Aorta (tissue), 5 donors: ENCODE measurements at regions of chr15 and their contacts with region 1.

Region 1: GRCh38 chr15:85794603-85795336 is at the start of gene KLHL25:
- DNase-seq: peak; percentile 97
- ATAC-seq: peak; percentile 97
- H3K4me3 ChIP-seq: peak within 1 kb of the TSS; percentile 71 to 92
- H3K27ac ChIP-seq: peak within 1 kb of the TSS; percentile 53 to 85
- H3K4me1 ChIP-seq: no peaks in the 10 kb centered on the region
- H3K27me3 ChIP-seq: no peaks in the 10 kb centered on the region
- total RNA-seq, gene KLHL25: 6.4 to 9.2 TPM

Region 2: DNA sequence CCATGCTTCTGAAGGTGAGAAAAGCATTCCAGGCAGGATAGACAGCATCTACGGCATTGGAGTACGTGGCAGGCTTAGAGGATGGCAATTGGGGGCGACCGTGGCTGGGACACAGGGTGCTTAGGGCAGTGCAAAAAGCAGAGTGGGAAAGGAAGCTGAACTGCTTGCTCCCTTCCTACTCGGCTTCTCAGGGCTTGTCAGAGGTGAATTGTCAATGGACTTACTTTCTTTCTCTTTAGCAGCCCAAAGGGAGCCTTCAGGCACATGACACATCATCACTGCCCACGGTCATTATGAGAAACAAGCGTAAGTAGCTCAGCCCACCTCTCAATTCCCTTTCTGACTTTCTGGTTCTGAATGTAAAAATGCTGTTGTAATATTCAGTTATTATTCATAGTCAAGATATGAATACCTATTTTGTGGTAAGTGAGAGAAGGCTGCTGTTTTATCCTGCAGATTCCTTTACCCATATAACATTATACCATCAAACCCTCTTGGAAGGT is 84.4 kb before region 1 on chr15:
- intact Hi-C with region 1: no loop called
- DNase-seq: no peak
- ATAC-seq: no peak
- H3K4me3 ChIP-seq: no peak overlapping the region
- H3K27ac ChIP-seq: no peak overlapping the region
- H3K4me1 ChIP-seq: peaks cover 2 to 17% of the 10 kb centered on the region in 2 donors
- H3K27me3 ChIP-seq: no peaks in the 10 kb centered on the region

Region 3: GRCh38 chr15:85737061-85737460 is 57.7 kb before region 1 on chr15:
- intact Hi-C with region 1: no loop called
- DNase-seq: no peak
- ATAC-seq: no peak
- H3K4me3 ChIP-seq: no peak overlapping the region
- H3K27ac ChIP-seq: no peak overlapping the region
- H3K4me1 ChIP-seq: no peaks in the 10 kb centered on the region
- H3K27me3 ChIP-seq: no peaks in the 10 kb centered on the region

Region 4: DNA sequence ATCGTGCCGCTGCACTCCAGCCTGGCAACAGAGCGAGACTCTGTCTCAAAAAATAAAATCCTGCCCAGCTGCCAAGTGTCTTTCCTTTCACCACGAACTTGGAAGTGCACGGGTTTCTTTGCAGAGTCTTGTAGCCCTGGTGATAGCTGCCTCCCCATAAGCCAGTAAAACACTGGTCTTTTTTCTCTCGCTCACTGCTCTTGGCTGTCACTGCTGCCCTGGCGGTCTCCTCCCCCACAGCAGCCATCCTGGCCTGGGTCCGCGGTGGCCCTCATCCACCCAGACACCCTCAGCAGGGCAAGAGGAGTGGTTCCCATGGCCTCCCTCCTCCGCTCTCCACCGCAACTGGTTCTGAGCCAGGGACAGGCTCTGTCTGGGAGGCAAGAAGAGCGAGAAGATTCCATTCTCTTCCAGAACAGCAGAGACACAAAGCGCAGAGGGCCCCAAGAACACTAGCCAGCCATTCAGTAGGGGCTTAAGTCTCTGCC is 44.4 kb before region 1 on chr15:
- intact Hi-C with region 1: loop called in 1 of 2 experiments (anchors 5 kb)
- DNase-seq: peak; percentile 86 to 89
- ATAC-seq: peak; percentile 79
- H3K4me3 ChIP-seq: no peak overlapping the region
- H3K27ac ChIP-seq: peak overlapping the region in 1 of 2 donors; percentile 20
- H3K4me1 ChIP-seq: no peaks in the 10 kb centered on the region
- H3K27me3 ChIP-seq: no peaks in the 10 kb centered on the region